ENCODE measurements at regions of chr19 and their contacts with region 1.

Region 1: GRCh38 chr19:18322759-18323460 is at the start of gene LSM4:
- DNase-seq: peak; percentile 96 to 98 (median 97)
- H3K4me3 ChIP-seq: peak within 1 kb of the TSS; percentile 60 to 93 (median 73)
- H3K4me3 Mint-ChIP-seq: peak within 1 kb of the TSS; percentile 78 to 91
- H3K27ac ChIP-seq: peak within 1 kb of the TSS; percentile 64 to 89
- H3K27ac Mint-ChIP-seq: peak within 1 kb of the TSS; percentile 90 to 96 (median 94)
- H3K4me1 ChIP-seq: peaks cover 56 to 62% of the 10 kb centered on the region in 2 donors
- H3K4me1 Mint-ChIP-seq: peaks cover 56% of the 10 kb centered on the region
- H3K27me3 ChIP-seq: no peaks in the 10 kb centered on the region
- H3K27me3 Mint-ChIP-seq: no peaks in the 10 kb centered on the region
- CTCF ChIP-seq: no peak
- polyA plus RNA-seq, gene LSM4: 66.5 to 143 (median 97.0) TPM

Region 2: DNA sequence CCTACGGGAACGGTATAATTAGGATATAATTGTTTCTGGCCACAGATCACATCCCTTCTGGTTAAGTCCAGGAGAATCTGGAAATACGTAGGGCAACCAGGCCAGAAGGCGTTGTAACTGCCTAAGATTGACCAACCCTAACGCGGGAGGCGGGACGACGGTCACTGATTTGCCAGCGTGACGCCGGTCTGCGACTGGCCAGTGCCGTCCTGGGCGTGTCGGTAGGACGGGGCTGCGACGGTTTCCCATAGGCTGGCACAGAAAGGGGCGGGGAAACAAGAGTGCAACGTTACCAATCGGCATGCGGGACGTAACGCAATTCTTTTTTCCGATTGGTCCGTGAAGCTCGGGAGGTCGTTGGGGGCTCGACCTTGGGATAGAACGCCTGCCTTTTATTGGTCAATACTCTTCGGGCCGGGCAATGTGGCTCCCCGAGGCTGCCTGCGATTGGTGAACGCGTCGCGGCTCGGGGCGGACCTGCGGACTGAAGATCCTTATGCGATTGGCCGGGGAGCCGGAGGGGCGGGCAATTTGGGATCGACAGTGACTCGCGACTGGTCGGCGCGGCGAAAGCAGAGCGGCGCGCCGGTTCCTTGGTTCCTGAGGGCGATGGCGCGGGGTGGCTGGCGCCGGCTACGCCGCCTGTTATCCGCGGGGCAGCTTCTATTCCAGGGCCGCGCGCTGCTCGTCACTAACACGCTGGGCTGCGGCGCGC is 130.1 kb before region 1 on chr19 and contains the start of gene MPV17L2:
- intact Hi-C with region 1: loop called in 1 of 2 experiments (anchors 5 kb)
- DNase-seq: peak; percentile 99 to 100 (median 100)
- H3K4me3 ChIP-seq: peak within 1 kb of the TSS; percentile 62 to 88 (median 64)
- H3K4me3 Mint-ChIP-seq: peak within 1 kb of the TSS; percentile 80 to 93
- H3K27ac ChIP-seq: peak within 1 kb of the TSS; percentile 81 to 90
- H3K27ac Mint-ChIP-seq: peak within 1 kb of the TSS; percentile 92 to 96 (median 96)
- H3K4me1 ChIP-seq: peaks cover 29 to 37% of the 10 kb centered on the region in 2 donors
- H3K4me1 Mint-ChIP-seq: peaks cover 28% of the 10 kb centered on the region
- H3K27me3 ChIP-seq: no peaks in the 10 kb centered on the region
- H3K27me3 Mint-ChIP-seq: peaks cover 0 to 4% (median 0%) of the 10 kb centered on the region in 3 donors
- CTCF ChIP-seq: no peak
- polyA plus RNA-seq, gene MPV17L2: 14.3 to 20.2 (median 15.0) TPM

Region 3: DNA sequence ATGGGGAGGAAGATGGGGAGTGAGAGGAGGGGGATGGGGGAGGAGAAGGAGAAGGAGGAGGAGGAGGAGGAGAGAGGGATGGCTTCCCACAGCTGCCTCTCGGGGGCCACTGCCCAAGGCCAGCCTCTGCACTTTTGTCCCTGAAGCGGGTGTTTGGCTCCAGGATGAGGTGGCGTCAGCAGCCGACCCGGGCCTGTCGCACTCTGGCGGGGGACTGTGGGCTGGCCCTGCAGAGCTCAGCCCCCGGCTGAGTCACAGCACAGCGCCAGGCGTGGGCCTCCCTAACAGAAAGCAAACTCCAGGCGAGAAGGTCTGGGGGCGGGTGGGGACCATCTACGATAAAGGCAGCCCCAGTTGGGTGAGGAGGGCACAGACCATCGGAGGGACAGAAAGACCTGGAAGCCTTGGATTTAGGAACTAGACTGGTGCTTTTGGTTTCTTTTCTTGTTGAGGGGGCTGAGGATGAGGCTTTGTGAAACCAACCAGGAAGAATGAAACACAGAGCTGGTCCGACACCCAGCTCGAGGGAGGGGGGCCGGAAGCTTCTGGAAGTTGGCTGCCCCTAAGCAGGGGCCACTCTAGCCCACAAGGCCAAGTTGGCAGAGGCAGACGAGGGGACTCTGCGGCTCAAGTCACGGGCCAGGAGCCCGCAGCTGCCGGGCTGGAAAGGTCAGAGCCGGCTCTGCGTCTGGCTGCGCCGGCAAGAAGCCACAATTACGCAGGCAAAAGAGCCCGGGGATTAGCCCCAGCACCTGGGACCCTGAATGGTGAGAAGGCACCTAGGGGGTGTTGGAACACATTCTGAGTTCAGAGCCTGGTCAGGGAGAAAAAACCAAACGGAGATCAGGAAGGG is 18.2 kb before region 1 on chr19:
- intact Hi-C with region 1: loop called (anchors 2 kb)
- DNase-seq: peak; percentile 84 to 86 (median 85)
- H3K4me3 ChIP-seq: peak overlapping the region; percentile 38 to 76 (median 45)
- H3K4me3 Mint-ChIP-seq: peak overlapping the region; percentile 88 to 92
- H3K27ac ChIP-seq: peak overlapping the region; percentile 87 to 98
- H3K27ac Mint-ChIP-seq: peak overlapping the region; percentile 97 to 100 (median 99)
- H3K4me1 ChIP-seq: peaks cover 50 to 57% of the 10 kb centered on the region in 2 donors
- H3K4me1 Mint-ChIP-seq: peaks cover 42% of the 10 kb centered on the region
- H3K27me3 ChIP-seq: no peaks in the 10 kb centered on the region
- H3K27me3 Mint-ChIP-seq: no peaks in the 10 kb centered on the region
- CTCF ChIP-seq: no peak

Region 4: DNA sequence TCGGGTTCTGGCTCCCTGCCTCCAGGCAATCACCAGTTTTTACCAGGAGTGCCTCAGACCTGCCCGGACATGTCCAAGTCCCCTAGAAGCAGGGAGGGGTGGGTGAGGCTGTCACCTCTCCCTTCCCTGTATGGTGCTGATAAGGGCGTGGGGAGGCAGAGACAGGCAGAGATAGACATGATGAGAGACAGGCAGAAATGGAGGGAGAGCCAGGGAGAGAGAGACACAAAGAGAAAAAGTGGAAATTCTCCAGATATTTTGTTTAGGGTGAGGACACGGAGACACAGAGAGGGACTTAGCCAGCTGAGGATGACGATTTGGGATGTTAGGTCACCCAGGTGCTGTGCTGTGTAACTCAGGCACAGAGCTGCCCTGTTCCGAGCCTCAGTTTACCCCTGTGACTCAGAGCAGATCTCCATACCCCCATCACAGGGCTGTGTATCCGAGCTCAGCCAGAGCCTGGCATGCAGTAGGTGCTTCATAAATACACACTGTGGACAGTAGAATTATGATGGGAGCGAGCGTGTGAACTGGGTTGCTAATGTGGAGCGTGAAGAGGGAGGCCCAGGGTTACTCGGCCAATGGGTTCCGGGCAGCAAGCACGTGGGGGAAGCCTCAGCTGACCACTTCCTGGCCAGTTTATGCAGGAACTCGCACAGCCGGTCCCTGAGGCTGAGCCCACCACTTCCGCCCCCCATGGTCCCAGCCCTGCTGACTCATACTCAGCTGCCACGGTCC is 51.2 kb after region 1 on chr19:
- intact Hi-C with region 1: no loop called
- DNase-seq: peak; percentile 99 to 100 (median 100)
- H3K4me3 ChIP-seq: peak overlapping the region in 1 of 3 experiments; percentile 20
- H3K4me3 Mint-ChIP-seq: peak overlapping the region; percentile 14 to 67
- H3K27ac ChIP-seq: peak overlapping the region; percentile 94 to 96
- H3K27ac Mint-ChIP-seq: peak overlapping the region; percentile 93 to 98 (median 94)
- H3K4me1 ChIP-seq: peaks cover 32 to 48% of the 10 kb centered on the region in 2 donors
- H3K4me1 Mint-ChIP-seq: peaks cover 47% of the 10 kb centered on the region
- H3K27me3 ChIP-seq: no peaks in the 10 kb centered on the region
- H3K27me3 Mint-ChIP-seq: peaks cover 1 to 2% (median 2%) of the 10 kb centered on the region in 3 donors
- CTCF ChIP-seq: no peak

Measured in CD14-positive monocyte (primary cell).